ENCODE measurements at regions of chr3 and their contacts with region 1.

Region 1: GRCh38 chr3:56915966-56916586 is 114.3 kb upstream of the ARHGEF3 start:
- DNase-seq: peak; percentile 25 to 55
- ATAC-seq: peak; percentile 79 to 93 (median 85)
- H3K4me3 ChIP-seq: peak overlapping the region in 9 of 10 donors; percentile 25 to 60 (median 53)
- H3K27ac ChIP-seq: peak overlapping the region in 9 of 10 donors; percentile 36 to 81 (median 71)
- H3K4me1 ChIP-seq: peaks cover 5 to 43% (median 26%) of the 10 kb centered on the region in 9 donors
- H3K27me3 ChIP-seq: no peaks in the 10 kb centered on the region
- CTCF ChIP-seq: peak in 2 of 9 donors; percentile 5 to 34

Region 2: GRCh38 chr3:56855856-56856512 is 60.1 kb before region 1 on chr3:
- intact Hi-C with region 1: loop called in 1 of 10 experiments (anchors 5 kb)
- DNase-seq: peak; percentile 15 to 34
- ATAC-seq: peak in 4 of 8 donors; percentile 47 to 78 (median 58)
- H3K4me3 ChIP-seq: no peak overlapping the region
- H3K27ac ChIP-seq: peak overlapping the region in 1 of 10 donors; percentile 45
- H3K4me1 ChIP-seq: peaks cover 0 to 20% (median 0%) of the 10 kb centered on the region in 9 donors
- H3K27me3 ChIP-seq: no peaks in the 10 kb centered on the region
- CTCF ChIP-seq: peak; percentile 17 to 75 (median 54)

Region 3: DNA sequence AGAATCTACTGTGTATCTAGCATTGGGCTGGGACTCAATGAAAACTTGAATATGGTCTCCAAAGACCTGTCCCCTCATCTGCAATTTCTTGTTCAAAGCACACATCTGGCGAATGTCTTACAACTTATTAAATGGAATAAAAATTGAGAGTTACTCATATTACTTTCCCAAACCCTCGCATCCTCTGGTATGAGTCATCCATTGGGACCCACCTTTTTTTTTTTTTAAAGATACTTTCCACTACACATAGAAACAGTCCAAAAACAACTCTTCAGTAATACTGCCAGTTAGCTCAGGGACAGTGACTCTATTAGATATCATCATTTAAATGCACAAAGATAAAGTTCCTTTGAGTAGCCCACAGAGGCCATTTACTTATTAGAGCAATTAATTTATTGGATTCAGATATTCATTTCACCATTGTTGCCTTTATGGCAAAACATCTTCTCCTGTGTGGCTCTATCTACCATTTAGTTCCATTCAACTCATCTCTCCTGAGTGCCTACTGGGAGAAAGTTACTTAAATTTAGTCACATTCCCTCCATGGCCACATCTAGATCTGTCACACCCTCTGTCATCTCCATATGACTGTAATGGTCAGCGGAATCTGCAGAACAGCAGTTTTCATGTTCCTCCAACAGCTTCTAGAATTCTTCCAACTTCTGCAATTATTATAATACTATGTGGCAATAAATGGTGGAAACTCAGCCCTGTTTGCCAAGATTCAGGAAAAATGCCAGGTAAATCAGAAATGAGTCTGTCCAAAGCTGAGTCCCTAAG is 36.5 kb before region 1 on chr3:
- intact Hi-C with region 1: loop called in 1 of 10 experiments (anchors 5 kb)
- DNase-seq: no peak
- ATAC-seq: peak in 5 of 8 donors; percentile 43 to 77 (median 52)
- H3K4me3 ChIP-seq: no peak overlapping the region
- H3K27ac ChIP-seq: peak overlapping the region in 3 of 10 donors; percentile 70 to 80 (median 80)
- H3K4me1 ChIP-seq: peaks cover 0 to 40% (median 15%) of the 10 kb centered on the region in 9 donors
- H3K27me3 ChIP-seq: no peaks in the 10 kb centered on the region
- CTCF ChIP-seq: no peak